ENCODE measurements at regions of chr2 and their contacts with region 1.

Region 1: DNA sequence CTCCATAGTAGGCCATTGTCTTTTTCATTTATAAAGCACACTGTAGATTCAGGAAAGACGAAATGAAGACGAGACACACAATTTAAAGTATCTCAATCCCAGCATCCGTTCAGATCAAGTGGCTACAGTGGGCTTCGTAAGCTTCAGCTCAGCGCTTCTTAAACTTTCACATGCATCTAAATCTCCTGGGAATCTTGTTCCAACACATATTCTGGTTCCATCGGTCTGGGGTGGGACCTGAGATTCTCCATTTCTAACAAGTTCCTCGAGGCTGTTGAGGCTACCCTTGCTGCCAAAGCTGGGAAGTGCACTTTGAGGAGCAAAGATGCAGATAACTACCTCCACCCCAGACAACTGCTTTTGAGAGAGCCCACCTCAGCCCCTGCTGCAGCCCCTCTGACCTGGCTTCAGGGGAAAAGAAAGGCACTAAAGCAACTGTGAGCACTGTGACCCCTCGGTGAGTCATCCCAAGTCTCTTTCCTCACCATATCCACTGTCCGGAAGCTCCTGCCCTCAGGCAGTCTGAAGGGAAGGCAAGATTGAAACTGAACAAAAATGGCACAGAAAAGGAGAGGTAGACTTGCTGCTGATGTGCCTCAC is 201.1 kb upstream of the FBXO11 start:
- DNase-seq: no peak
- H3K4me3 ChIP-seq: no peak overlapping the region
- H3K27ac ChIP-seq: peak overlapping the region in 2 of 4 donors; percentile 29 to 75
- H3K4me1 ChIP-seq: peaks cover 18 to 31% (median 22%) of the 10 kb centered on the region in 4 donors
- H3K27me3 ChIP-seq: no peaks in the 10 kb centered on the region
- CTCF ChIP-seq: peak in 1 of 3 experiments; percentile 4
- EP300 ChIP-seq: no peak
- POLR2A ChIP-seq: no peak

Region 2: DNA sequence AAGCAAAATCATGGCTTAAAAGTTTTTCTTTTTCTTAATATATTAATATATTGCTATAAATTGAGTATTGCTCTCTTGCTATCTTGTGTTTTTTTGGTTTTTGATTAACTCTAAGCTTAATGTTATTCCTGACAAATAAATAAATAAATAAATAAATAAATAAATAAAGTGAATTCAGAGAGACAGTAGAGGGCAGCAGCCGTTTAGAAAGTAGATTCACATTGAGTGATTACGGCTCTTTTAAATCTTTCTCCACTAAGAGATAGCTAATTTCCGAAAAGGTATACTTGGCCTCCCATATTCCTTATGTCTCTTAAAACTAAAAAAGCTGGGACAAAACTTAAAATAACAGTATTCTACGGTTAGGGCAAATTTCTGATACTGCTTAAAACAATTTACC is 670.1 kb before region 1 on chr2:
- intact Hi-C with region 1: loop called (anchors 10 kb)
- DNase-seq: no peak
- H3K4me3 ChIP-seq: no peak overlapping the region
- H3K27ac ChIP-seq: no peak overlapping the region
- H3K4me1 ChIP-seq: no peaks in the 10 kb centered on the region
- H3K27me3 ChIP-seq: no peaks in the 10 kb centered on the region
- CTCF ChIP-seq: peak; percentile 40 to 48 (median 45)
- EP300 ChIP-seq: no peak
- POLR2A ChIP-seq: no peak

Region 3: DNA sequence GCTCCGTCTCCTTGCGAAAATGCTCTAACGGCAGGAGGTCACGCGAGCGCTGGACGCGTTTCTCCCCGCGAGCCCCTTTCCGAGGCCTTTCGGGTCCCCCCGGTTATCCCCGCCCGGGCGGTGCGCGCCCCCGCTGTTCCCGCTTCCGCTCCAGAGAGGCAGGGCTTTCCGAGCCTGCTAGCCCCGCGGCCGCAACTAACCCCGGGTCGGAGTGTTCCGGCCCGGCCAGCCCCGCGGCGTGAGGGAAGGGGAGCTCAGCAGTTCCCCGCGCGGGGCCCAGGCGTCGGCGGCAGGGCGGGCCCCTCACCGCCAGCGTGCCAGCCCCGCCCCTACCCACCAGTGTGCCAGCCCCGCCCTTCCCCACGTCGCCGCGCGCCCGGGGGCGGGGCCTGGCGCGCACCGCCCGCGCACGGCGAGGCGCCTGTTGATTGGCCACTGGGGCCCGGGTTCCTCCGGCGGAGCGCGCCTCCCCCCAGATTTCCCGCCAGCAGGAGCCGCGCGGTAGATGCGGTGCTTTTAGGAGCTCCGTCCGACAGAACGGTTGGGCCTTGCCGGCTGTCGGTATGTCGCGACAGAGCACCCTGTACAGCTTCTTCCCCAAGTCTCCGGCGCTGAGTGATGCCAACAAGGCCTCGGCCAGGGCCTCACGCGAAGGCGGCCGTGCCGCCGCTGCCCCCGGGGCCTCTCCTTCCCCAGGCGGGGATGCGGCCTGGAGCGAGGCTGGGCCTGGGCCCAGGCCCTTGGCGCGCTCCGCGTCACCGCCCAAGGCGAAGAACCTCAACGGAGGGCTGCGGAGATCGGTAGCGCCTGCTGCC is 324.5 kb before region 1 on chr2 and contains the start of gene MSH6:
- intact Hi-C with region 1: loop called (anchors 10 kb)
- DNase-seq: peak; percentile 96
- H3K4me3 ChIP-seq: peak within 1 kb of the TSS; percentile 77 to 99 (median 84)
- H3K27ac ChIP-seq: peak within 1 kb of the TSS; percentile 92 to 99 (median 94)
- H3K4me1 ChIP-seq: peaks cover 12 to 38% (median 31%) of the 10 kb centered on the region in 4 donors
- H3K27me3 ChIP-seq: no peaks in the 10 kb centered on the region
- CTCF ChIP-seq: peak in 1 of 3 experiments; percentile 17
- EP300 ChIP-seq: no peak
- POLR2A ChIP-seq: peak; percentile 67
- total RNA-seq, gene MSH6: 28.2 to 47.0 (median 39.6) TPM

Region 4: DNA sequence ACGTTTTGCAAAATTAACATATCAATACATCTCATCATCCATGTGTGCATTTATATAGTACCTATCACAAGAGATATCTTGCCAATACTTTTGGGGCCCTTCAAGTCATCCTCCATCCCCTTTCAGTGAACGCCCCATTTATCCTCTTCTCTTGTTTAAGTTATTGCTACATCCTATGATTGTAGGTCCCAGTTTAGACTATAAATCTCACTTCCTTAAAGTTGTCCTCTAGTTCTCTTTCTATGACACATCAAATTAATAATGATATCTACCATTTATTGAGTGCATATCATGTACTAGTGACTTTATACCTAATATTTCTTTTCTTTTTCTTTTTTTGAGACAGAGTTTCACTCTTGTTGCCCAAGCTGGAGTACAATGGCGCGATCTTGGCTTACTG is 172.4 kb before region 1 on chr2:
- intact Hi-C with region 1: no loop called
- DNase-seq: no peak
- H3K4me3 ChIP-seq: no peak overlapping the region
- H3K27ac ChIP-seq: no peak overlapping the region
- H3K4me1 ChIP-seq: no peaks in the 10 kb centered on the region
- H3K27me3 ChIP-seq: no peaks in the 10 kb centered on the region
- CTCF ChIP-seq: no peak
- EP300 ChIP-seq: no peak
- POLR2A ChIP-seq: no peak

Region 5: DNA sequence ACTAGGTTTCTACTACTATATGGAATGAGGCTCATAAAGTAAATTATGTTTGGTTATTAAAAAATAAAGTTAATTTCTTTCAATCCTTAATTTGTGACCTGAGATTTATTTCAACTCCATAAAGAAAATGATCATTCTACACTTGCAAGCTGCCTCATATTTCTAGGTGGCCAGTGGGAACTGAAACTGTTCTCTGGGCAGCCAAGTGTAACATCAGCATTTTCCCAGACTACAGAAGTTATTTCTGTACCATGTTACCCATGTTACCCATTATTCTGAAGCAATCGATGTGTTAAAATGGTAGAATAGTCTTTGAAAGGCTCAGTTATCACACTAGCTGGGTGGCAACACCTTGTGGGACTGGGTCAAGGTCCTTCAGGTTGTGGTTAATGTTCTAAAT is 61.8 kb before region 1 on chr2:
- intact Hi-C with region 1: no loop called
- DNase-seq: no peak
- H3K4me3 ChIP-seq: no peak overlapping the region
- H3K27ac ChIP-seq: no peak overlapping the region
- H3K4me1 ChIP-seq: no peaks in the 10 kb centered on the region
- H3K27me3 ChIP-seq: no peaks in the 10 kb centered on the region
- CTCF ChIP-seq: no peak
- EP300 ChIP-seq: no peak
- POLR2A ChIP-seq: no peak

Region 6: DNA sequence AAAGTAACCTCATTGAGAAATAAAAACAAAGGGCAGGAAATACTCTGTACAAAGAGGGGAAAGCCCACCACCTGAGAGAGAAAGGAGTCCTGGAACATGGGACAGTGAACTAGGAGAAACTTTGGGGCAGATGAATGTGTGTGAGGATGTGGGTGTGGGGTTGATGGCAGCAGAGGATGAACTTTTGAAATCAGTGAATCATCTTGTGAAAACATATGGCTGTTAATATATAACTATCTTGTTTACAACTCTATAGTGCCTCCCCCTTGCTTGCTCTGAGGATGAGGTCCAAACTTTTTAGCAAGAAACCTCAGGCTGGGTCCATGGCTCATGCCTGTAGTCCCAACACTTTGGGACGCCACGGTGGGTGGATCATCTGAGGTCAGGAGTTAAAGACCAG is 819.9 kb after region 1 on chr2:
- intact Hi-C with region 1: no loop called
- DNase-seq: peak; percentile 17
- H3K4me3 ChIP-seq: no peak overlapping the region
- H3K27ac ChIP-seq: no peak overlapping the region
- H3K4me1 ChIP-seq: no peaks in the 10 kb centered on the region
- H3K27me3 ChIP-seq: no peaks in the 10 kb centered on the region
- CTCF ChIP-seq: no peak
- EP300 ChIP-seq: no peak
- POLR2A ChIP-seq: no peak